ENCODE measurements at regions of chr6 and their contacts with region 1.

Region 1: DNA sequence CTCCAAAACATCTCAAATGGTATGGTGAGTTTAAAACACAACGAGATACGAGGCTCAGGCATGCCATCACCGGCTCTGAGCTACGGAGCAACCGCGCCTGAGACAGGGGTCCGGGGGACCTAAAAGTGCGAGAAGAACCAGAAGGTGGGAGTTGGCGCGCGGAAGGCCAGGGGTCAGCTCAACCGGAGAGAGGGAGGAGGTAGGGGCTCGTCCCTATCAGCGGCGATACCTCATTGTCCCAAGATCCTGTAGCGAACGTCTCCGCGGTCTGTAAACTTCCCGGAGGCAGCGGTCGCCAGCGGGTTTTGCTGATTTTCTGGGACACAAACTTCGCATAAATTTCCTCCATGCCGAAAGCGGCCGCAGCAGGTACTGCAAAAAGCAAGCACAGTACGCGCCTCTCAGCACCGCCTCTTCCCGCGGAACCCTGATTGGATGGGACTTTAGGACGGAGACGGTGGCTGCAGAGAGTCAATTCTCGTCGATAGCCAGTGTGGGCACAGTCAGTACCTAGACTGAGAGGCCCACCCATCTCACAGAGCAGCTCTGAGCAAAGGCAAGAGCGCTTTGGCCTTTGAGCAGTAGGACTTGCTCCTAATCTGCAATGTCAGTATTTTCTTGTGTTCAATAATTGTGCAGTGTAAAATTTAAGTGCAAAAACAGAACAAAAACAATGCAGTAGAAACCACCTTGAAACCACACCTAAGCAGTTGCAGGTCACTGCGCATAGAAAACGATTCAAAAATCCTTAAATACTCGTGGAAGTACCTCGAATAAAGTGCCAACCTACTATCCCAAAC is at the start of gene NUP43:
- DNase-seq: peak; percentile 88 to 95
- ATAC-seq: peak; percentile 73 to 81 (median 74)
- H3K4me3 ChIP-seq: peak within 1 kb of the TSS; percentile 93
- H3K4me3 Mint-ChIP-seq: peak within 1 kb of the TSS; percentile 98
- H3K27ac ChIP-seq: peak within 1 kb of the TSS; percentile 65
- H3K27ac Mint-ChIP-seq: peak within 1 kb of the TSS; percentile 90 to 94
- H3K4me1 ChIP-seq: peaks cover 28% of the 10 kb centered on the region
- H3K4me1 Mint-ChIP-seq: peaks cover 25 to 31% of the 10 kb centered on the region in 2 donors
- H3K27me3 ChIP-seq: no peaks in the 10 kb centered on the region
- H3K27me3 Mint-ChIP-seq: no peaks in the 10 kb centered on the region
- CTCF ChIP-seq: peak; percentile 45
- total RNA-seq, gene NUP43: 20.8 to 33.4 (median 23.5) TPM

Region 2: GRCh38 chr6:148999929-149000468 is 746.3 kb before region 1 on chr6:
- intact Hi-C with region 1: no loop called
- DNase-seq: peak in 1 of 2 donors; percentile 4
- ATAC-seq: peak in 2 of 3 donors; percentile 43 to 57
- H3K4me3 ChIP-seq: no peak overlapping the region
- H3K4me3 Mint-ChIP-seq: peak overlapping the region; percentile 73
- H3K27ac ChIP-seq: peak overlapping the region; percentile 38
- H3K27ac Mint-ChIP-seq: peak overlapping the region; percentile 55 to 72
- H3K4me1 ChIP-seq: peaks cover 18% of the 10 kb centered on the region
- H3K4me1 Mint-ChIP-seq: peaks cover 51% of the 10 kb centered on the region in 2 donors
- H3K27me3 ChIP-seq: no peaks in the 10 kb centered on the region
- H3K27me3 Mint-ChIP-seq: no peaks in the 10 kb centered on the region
- CTCF ChIP-seq: no peak

Region 3: GRCh38 chr6:149393002-149393679 is 353.2 kb before region 1 on chr6:
- intact Hi-C with region 1: no loop called
- DNase-seq: no peak
- ATAC-seq: no peak
- H3K4me3 ChIP-seq: no peak overlapping the region
- H3K4me3 Mint-ChIP-seq: no peak overlapping the region
- H3K27ac ChIP-seq: no peak overlapping the region
- H3K27ac Mint-ChIP-seq: peak overlapping the region; percentile 22 to 43
- H3K4me1 ChIP-seq: no peaks in the 10 kb centered on the region
- H3K4me1 Mint-ChIP-seq: peaks cover 43% of the 10 kb centered on the region in 2 donors
- H3K27me3 ChIP-seq: no peaks in the 10 kb centered on the region
- H3K27me3 Mint-ChIP-seq: no peaks in the 10 kb centered on the region
- CTCF ChIP-seq: no peak

Region 4: GRCh38 chr6:149545754-149546528 is 200.4 kb before region 1 on chr6 and contains the start of gene PPIL4:
- intact Hi-C with region 1: loop called (anchors 5 kb)
- DNase-seq: peak; percentile 98 to 99
- ATAC-seq: peak; percentile 89 to 97 (median 91)
- H3K4me3 ChIP-seq: peak within 1 kb of the TSS; percentile 99
- H3K4me3 Mint-ChIP-seq: peak within 1 kb of the TSS; percentile 97
- H3K27ac ChIP-seq: peak within 1 kb of the TSS; percentile 99
- H3K27ac Mint-ChIP-seq: peak within 1 kb of the TSS; percentile 91 to 96
- H3K4me1 ChIP-seq: peaks cover 15% of the 10 kb centered on the region
- H3K4me1 Mint-ChIP-seq: peaks cover 41 to 42% of the 10 kb centered on the region in 2 donors
- H3K27me3 ChIP-seq: no peaks in the 10 kb centered on the region
- H3K27me3 Mint-ChIP-seq: no peaks in the 10 kb centered on the region
- CTCF ChIP-seq: peak; percentile 95
- total RNA-seq, gene PPIL4: 24.4 to 32.8 (median 25.0) TPM

Region 5: DNA sequence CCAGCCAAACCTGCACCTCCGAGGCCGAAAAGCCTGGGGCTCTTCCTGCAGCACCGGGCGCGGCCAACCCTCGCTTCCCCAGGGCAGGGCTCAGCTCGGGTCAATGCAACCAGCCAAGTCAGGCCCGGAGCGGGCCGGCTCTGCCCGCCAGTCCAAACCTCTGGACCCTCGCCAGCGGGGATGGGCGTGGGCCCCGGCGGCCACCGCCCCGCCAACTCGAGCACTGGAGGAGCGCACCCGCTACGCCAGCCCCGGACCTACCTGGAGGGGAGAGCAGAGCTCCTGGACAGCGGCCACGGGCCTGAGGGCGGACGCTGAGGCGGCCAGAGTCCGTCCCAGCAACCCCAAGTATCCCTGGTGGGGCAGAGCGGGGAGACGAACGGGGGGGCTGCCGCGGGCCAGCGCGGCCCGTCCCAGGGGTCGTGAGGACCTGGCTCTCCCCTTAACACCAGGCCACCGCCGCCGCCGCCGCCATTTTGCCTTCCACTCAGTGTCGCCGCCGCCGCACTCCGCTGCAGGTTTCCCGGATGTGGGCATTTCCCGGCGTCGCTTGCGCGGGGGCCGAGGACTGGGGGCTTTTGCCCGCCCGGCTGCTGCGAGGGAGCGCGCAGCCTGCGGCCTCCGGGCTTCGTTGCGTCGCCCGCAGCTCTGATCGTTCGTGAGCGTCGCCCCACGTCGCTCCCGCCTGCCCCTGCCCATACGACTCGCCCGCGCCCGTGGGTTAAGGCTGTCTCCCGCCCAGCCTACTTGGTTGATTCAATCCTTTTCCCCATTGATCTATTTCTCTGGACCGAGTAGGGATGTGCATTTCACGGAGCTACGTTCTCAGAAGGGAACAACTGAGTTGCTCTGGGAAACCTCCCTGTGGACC is 28.5 kb before region 1 on chr6 and contains the start of gene LATS1:
- intact Hi-C with region 1: loop called (anchors 1 kb)
- DNase-seq: peak; percentile 92 to 94
- ATAC-seq: peak; percentile 90 to 97 (median 95)
- H3K4me3 ChIP-seq: peak within 1 kb of the TSS; percentile 81
- H3K4me3 Mint-ChIP-seq: peak within 1 kb of the TSS; percentile 96
- H3K27ac ChIP-seq: peak within 1 kb of the TSS; percentile 92
- H3K27ac Mint-ChIP-seq: peak within 1 kb of the TSS; percentile 94 to 97
- H3K4me1 ChIP-seq: peaks cover 11% of the 10 kb centered on the region
- H3K4me1 Mint-ChIP-seq: peaks cover 25 to 29% of the 10 kb centered on the region in 2 donors
- H3K27me3 ChIP-seq: no peaks in the 10 kb centered on the region
- H3K27me3 Mint-ChIP-seq: no peaks in the 10 kb centered on the region
- CTCF ChIP-seq: no peak
- total RNA-seq, gene LATS1: 37.9 to 52.5 (median 49.4) TPM

Region 6: GRCh38 chr6:149852180-149852579 is 105.8 kb after region 1 on chr6:
- intact Hi-C with region 1: no loop called
- DNase-seq: peak in 1 of 2 donors; percentile 14
- ATAC-seq: peak in 2 of 3 donors; percentile 38 to 55
- H3K4me3 ChIP-seq: no peak overlapping the region
- H3K4me3 Mint-ChIP-seq: no peak overlapping the region
- H3K27ac ChIP-seq: no peak overlapping the region
- H3K27ac Mint-ChIP-seq: no peak overlapping the region
- H3K4me1 ChIP-seq: peaks cover 15% of the 10 kb centered on the region
- H3K4me1 Mint-ChIP-seq: peaks cover 8 to 13% of the 10 kb centered on the region in 2 donors
- H3K27me3 ChIP-seq: no peaks in the 10 kb centered on the region
- H3K27me3 Mint-ChIP-seq: peaks cover 29 to 42% of the 10 kb centered on the region in 2 donors
- CTCF ChIP-seq: no peak

Measured in natural killer cell (primary cell).